Activated naive CD4-positive, alpha-beta T cell treated with anti-CD3 and anti-CD28 coated beads for 36 hours (primary cell): ENCODE measurements at regions of chr10 and their contacts with region 1.

Region 1: DNA sequence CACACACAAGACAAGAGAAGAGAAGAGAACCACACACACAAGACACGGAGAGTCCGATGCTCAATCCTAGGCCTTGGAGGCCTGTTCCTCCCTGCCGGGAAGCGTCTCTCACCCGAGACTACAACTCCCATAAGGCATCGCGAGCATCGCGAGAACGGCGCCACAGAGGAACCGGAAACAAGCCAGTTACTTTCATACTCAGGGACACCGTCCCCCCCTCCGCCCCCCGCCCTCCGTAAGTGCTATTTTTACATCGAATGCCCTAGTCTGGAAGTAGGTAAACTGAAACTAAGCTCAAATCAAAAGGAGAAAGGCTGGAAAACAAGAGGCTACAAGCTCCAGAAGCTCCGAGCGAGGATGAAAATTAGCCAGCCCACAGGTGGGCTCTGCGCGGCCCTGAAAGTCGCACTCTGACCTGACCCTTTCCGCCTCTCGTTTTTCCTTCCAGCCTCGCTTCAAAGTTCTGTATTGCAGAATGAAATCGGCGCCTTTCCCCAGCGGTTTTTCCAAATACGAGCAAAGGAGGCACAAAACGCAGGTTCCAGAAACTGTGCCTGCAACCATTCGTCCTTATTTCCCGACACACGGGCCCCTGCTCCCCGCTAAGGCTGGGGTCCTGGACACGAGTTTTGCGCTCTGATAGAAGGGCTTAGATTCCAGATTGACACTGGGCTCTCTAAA is 11.5 kb upstream of the DNAJC12 start:
- DNase-seq: peak; percentile 98
- H3K4me3 Mint-ChIP-seq: peak overlapping the region; percentile 97
- H3K27ac Mint-ChIP-seq: peak overlapping the region; percentile 98
- H3K4me1 Mint-ChIP-seq: peaks cover 8% of the 10 kb centered on the region
- H3K27me3 Mint-ChIP-seq: no peaks in the 10 kb centered on the region

Region 2: DNA sequence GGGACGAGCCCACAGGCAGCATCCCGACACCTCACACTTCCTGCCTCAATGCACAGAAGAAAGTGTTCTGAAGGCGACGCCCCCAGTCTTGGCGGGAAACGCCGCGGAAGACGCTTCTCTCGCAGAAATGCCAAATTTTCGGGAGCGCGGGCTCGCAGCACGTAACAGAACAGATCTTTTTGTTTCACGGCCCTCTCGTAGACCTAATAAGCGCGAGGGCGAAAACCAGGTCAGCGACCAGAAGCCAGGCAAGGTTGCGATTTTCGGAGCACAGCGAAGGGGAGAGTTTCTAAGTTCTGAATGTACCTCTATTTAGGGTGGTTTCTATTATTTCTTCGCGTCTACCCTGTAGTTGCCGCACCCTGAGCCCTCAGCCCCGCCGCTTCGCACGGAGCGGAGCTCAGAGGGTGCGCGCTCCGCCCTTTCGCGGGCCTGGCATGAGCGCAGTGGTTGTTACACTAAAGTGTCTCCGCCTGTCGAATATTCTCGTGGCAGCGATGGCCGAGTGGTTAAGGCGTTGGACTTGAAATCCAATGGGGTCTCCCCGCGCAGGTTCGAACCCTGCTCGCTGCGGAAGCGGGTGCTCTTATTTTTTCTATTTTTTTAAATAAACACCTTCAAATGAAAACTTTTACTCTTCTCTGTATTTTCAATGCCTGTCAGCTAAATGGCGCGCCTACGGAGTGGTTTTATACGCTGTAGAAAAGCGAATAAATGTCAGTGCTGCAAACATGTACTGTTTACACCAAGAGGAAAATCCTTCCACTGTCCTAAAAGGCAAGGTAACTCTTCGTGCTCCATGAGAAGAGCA is 85.3 kb before region 1 on chr10:
- CTCF ChIA-PET with region 1: no interaction called
- intact Hi-C with region 1: loop called (anchors 1 kb)
- DNase-seq: peak; percentile 97
- H3K4me3 Mint-ChIP-seq: peak overlapping the region; percentile 93
- H3K27ac Mint-ChIP-seq: peak overlapping the region; percentile 99
- H3K4me1 Mint-ChIP-seq: peaks cover 4% of the 10 kb centered on the region
- H3K27me3 Mint-ChIP-seq: peaks cover 5% of the 10 kb centered on the region

Region 3: DNA sequence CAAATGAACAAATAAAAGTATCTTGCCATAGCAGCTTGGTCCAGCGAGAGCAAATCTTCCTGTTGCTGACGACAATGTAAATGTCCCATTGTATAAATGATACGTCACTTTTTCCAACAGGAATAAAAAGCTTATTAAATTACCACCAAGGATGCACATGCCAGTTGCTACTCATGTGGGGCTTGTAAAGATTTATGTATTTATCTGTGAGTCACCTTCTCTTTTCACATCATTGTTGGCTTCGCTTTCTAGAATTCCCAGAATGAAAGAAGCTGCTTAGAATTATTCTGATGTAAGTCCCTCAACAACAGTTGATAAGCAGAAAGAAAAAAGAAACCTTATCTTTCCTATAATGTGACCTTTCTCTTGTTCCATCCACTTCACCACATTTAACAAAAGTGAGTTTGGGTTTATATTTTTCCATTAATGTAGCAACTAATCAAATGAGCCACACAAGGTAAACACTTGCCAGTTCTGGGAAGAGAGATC is 33.9 kb before region 1 on chr10:
- CTCF ChIA-PET with region 1: interaction called, 3 read pairs
- intact Hi-C with region 1: loop called (anchors 1 kb)
- DNase-seq: no peak
- H3K4me3 Mint-ChIP-seq: no peak overlapping the region
- H3K27ac Mint-ChIP-seq: peak overlapping the region; percentile 84
- H3K4me1 Mint-ChIP-seq: peaks cover 16% of the 10 kb centered on the region
- H3K27me3 Mint-ChIP-seq: peaks cover 6% of the 10 kb centered on the region

Region 4: DNA sequence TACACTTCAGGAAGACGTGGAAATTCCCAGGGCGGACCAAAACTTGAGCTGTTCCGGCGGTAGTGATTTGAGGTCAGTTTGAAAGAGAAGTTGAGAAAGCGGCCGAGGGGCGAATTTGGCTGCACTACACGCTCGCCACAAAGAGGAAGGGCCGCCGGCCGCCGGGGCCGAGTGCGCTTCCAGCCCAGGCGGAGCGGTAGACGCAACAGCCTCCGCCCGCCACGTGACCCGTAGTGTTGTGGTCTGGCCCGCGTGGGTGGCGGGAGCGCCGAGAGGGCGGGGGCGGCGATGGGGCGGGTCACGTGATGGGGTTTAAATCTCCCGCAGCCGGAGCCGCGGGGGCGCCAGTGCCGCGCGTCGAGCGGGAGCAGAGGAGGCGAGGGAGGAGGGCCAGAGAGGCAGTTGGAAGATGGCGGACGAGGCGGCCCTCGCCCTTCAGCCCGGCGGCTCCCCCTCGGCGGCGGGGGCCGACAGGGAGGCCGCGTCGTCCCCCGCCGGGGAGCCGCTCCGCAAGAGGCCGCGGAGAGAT is 34.9 kb after region 1 on chr10 and contains the start of gene SIRT1:
- CTCF ChIA-PET with region 1: interaction called, 6 read pairs
- intact Hi-C with region 1: loop called (anchors 1 kb)
- DNase-seq: peak; percentile 88
- H3K4me3 Mint-ChIP-seq: peak within 1 kb of the TSS; percentile 90
- H3K27ac Mint-ChIP-seq: peak within 1 kb of the TSS; percentile 89
- H3K4me1 Mint-ChIP-seq: peaks cover 25% of the 10 kb centered on the region
- H3K27me3 Mint-ChIP-seq: no peaks in the 10 kb centered on the region
- total RNA-seq, gene SIRT1: 18.7 to 18.8 TPM

Region 5: GRCh38 chr10:68156373-68157185 is 307.1 kb after region 1 on chr10:
- CTCF ChIA-PET with region 1: interaction called, 114 read pairs
- intact Hi-C with region 1: no loop called
- DNase-seq: peak; percentile 83
- H3K4me3 Mint-ChIP-seq: no peak overlapping the region
- H3K27ac Mint-ChIP-seq: no peak overlapping the region
- H3K4me1 Mint-ChIP-seq: peaks cover 2% of the 10 kb centered on the region
- H3K27me3 Mint-ChIP-seq: peaks cover 3% of the 10 kb centered on the region